Prostate gland (tissue), 2 donors: ENCODE measurements at regions of chr4 and their contacts with region 1.

Region 1: DNA sequence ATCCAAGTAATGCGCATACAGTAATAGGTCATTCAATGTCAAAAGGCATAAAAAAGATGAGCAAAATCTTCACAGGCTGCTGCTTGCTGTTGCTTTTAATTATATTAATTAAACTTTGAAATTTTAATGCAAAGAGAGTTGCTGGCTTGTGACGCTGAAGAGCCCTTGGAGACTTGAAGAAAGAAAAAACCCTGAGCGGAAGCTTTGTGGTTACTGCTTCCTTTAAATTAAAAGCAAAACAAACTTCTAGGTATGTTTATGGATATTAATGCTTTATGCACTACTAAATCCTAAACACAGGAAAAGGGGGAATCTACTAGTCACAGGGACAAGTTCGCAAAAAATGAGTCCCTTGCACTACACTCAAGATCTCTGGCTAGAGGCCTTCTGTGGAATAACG is 166.7 kb downstream of the ANTXR2 start:
- DNase-seq: no peak
- H3K4me3 ChIP-seq: no peak overlapping the region
- H3K27ac ChIP-seq: no peak overlapping the region
- H3K4me1 ChIP-seq: no peaks in the 10 kb centered on the region
- H3K27me3 ChIP-seq: no peaks in the 10 kb centered on the region
- CTCF ChIP-seq: no peak
- POLR2A ChIP-seq: no peak

Region 2: GRCh38 chr4:80072744-80073472 is 166.6 kb after region 1 on chr4 and contains the start of gene ANTXR2:
- intact Hi-C with region 1: loop called (anchors 5 kb)
- DNase-seq: peak; percentile 83
- H3K4me3 ChIP-seq: peak within 1 kb of the TSS; percentile 87 to 98
- H3K27ac ChIP-seq: peak within 1 kb of the TSS; percentile 93 to 94
- H3K4me1 ChIP-seq: no peaks in the 10 kb centered on the region
- H3K27me3 ChIP-seq: no peaks in the 10 kb centered on the region
- CTCF ChIP-seq: peak in 1 of 4 experiments; percentile 15
- POLR2A ChIP-seq: peak; percentile 57
- total RNA-seq, gene ANTXR2: 86.1 to 133 TPM